ENCODE measurements at regions of chr4 and their contacts with region 1.

Region 1: GRCh38 chr4:57426779-57427395 is 316.7 kb upstream of the IGFBP7 start:
- DNase-seq: peak; percentile 75
- H3K27ac ChIP-seq: no peak overlapping the region
- CTCF ChIP-seq: peak; percentile 85

Region 2: DNA sequence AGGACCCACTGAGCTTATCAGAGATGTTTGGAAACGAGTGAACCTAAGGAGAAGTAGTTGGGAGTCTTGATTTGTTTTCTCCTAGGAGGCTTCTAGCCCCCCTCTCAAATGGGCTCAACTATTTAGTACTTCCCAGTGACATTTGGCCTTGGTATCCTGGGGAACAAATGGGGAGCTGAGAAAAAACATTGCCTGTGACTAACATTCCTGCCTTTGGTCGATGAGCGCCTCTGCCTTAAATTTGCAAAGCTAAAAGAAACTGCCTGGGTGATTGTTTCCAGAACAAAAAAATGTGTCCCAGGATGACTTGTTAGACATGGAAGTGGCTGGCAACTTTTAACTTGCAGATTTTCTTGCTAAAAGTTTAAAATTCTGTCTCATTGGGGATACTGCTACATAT is 257.9 kb before region 1 on chr4:
- CTCF ChIA-PET with region 1: interaction called, 27 read pairs
- POLR2A ChIA-PET with region 1: no interaction called
- DNase-seq: no peak
- H3K27ac ChIP-seq: no peak overlapping the region
- CTCF ChIP-seq: no peak

Region 3: GRCh38 chr4:57303012-57303751 is 123.7 kb before region 1 on chr4:
- CTCF ChIA-PET with region 1: no interaction called
- POLR2A ChIA-PET with region 1: no interaction called
- DNase-seq: no peak
- H3K27ac ChIP-seq: no peak overlapping the region
- CTCF ChIP-seq: no peak